ENCODE measurements at regions of chr9 and their contacts with region 1.

Region 1: DNA sequence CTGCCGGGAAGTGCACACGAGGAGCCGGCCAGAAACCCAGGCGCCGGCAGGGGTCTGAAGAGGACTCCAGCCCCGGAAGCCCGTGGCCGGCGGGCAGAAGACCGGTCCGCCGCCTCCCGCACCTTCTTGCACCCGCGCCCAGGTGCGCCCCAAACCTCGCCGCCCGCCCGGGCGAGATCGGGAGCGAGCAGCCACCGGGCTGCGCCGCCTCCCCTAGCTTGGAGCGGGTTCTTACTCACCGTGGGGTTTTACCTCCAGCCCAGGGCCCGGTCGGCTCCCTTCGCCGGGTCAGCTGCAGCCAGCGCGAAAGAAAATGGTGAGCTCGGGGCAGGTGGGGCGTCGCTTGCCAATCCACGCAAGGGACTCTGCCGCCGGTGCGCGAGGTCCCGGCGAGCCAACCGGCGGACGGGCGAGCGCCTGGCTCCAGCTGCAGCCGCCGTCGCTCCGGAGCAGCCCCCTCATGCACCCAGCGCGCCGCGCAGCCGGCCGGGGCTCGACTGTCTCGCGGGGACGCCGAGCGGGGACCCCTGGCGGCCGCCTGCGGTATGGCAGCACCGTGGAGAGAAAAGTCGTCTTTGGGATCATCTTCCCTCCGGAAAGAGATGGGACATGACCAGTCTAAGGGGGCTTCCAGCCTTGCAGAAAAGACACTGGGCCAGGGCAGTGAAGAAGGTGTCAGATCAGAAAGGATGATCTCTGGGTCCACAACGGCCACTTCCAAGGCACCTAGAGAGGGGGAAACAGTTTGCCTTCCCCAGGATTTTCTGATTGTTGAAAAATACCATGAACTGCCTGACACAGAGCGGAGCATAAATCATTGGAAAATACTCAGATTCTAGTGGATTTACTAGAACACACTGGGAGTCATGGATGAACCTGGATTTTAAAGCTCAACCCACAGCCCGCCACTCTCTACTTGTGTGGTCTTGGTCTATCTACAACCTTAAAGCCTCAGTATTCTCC is at the start of gene MOB3B:
- DNase-seq: peak; percentile 94
- total RNA-seq, gene MOB3B: 0.51 TPM

Region 2: GRCh38 chr9:27436234-27436633 is 93.4 kb before region 1 on chr9:
- intact Hi-C with region 1: no loop called
- DNase-seq: no peak

Region 3: DNA sequence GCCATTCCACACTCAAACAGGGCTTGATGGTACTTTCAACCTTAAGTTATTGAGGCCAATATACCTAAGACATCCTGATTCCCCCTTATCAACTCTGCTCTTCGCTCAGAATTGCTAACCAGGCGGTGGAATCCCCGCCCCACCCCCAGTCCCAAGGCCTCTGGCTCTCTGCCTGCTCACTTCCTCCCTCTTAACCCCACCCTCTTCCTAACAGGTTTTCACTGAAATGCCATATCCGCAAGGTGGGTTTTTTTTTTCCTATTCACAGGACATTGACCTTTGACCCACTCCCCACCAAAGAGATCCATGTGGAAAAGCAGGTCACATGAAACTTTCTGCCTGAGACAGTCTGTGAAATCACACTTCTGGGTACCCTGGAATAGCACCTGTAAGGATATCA is 72.2 kb before region 1 on chr9:
- intact Hi-C with region 1: no loop called
- DNase-seq: no peak

Region 4: DNA sequence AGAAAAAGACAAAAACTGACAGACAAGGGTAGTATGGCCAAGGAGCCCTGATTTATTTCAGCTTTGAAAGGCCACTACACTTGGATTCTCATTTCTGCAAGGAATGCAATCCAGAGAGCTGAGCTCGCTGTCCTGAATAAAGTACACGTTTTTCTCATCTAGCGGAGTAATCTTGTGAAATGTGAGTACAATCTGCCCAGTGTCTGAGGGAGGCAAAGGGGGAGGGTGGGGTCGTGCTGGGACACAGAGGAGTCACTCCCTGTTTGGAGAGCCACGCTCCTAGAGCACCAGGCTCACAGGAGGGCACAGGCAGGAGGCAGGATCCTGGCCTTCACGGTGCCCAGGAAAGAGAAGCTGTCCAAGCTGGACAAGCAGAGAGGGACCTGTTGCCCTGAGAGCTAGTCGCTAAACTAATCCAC is 56.5 kb before region 1 on chr9:
- intact Hi-C with region 1: loop called (anchors 10 kb)
- DNase-seq: no peak

Region 5: DNA sequence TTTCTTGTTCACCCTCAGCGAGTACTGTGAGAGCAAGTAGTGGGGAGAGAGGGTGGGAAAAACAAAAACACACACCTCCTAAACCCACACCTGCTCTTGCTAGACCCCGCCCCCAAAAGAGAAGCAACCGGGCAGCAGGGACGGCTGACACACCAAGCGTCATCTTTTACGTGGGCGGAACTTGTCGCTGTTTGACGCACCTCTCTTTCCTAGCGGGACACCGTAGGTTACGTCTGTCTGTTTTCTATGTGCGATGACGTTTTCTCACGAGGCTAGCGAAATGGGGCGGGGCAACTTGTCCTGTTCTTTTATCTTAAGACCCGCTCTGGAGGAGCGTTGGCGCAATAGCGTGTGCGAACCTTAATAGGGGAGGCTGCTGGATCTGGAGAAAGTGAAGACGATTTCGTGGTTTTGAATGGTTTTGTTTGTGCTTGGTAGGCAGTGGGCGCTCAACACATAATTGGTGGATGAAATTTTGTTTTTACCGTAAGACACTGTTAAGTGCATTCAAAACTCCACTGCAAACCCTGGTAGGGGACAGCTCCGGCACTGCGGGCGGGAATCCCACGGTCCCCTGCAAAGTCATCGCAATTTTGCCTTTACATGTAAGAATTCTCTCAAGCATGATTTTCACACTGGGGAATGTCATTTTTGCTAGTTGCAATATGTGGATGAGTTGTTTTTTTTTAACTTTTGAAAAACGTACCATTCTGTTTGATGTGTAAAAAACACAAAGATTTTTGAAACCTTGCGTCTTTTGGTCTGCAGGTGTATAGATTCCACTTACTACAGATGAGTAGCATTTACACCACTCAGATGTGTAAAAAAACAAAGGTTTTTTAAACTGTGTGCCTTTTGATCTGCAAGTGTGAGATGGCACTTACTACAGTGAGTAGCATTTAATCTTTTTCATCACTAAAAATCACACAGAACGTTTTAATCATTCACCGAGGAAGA is 44.3 kb after region 1 on chr9:
- intact Hi-C with region 1: no loop called
- DNase-seq: peak; percentile 97

Measured in cardiac septum (tissue), 1 donor.